Tibial artery (tissue), 4 donors: ENCODE measurements at regions of chr7 and their contacts with region 1.

Region 1: DNA sequence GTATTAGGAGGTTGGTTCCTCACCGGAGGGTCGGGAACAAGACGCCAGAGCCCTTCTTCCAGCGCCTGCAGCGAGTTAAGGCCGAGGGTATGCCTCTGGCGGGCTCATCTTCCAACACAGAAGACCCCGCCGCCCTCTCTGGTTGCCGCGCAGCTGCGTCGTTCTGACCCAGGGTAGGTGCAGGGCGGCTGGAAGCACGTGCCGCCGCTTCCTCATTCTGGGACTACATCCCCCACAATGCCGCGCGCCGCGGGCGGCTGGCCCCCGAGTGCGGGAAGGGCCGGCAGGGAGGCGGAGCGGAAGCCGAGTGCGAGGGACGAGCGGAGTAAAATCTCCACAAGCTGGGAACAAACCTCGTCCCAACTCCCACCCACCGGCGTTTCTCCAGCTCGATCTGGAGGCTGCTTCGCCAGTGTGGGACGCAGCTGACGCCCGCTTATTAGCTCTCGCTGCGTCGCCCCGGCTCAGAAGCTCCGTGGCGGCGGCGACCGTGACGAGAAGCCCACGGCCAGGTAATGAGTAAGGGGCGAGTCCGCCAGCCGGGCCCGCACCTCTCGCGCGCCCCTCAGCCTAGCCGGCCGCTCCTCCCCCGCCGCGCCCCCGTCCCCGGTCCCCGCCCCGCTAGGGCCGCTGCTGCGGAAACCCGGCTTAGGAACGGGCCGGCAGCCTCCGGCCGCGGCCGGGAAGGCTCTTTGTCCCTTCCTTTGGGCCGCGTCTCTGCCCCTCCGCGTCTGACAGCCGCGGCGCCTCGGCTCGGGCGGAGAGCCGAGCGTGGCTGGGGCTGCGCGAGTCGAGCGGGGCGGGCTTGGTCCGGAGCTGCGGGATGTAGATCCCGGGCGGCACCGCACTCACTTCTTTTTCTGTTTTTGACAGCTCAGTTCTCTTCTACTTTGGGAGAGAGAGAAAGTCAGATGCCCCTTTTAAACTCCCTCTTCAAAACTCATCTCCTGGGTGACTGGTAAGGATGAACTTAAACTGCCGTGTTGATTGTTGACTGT is at the start of gene CCDC126:
- DNase-seq: peak; percentile 92 to 97
- H3K4me3 ChIP-seq: peak within 1 kb of the TSS; percentile 85 to 94
- H3K27ac ChIP-seq: peak within 1 kb of the TSS; percentile 98
- H3K4me1 ChIP-seq: peaks cover 0 to 31% (median 9%) of the 10 kb centered on the region in 4 donors
- H3K27me3 ChIP-seq: peaks cover 0 to 2% of the 10 kb centered on the region in 2 donors
- CTCF ChIP-seq: no peak

Region 2: DNA sequence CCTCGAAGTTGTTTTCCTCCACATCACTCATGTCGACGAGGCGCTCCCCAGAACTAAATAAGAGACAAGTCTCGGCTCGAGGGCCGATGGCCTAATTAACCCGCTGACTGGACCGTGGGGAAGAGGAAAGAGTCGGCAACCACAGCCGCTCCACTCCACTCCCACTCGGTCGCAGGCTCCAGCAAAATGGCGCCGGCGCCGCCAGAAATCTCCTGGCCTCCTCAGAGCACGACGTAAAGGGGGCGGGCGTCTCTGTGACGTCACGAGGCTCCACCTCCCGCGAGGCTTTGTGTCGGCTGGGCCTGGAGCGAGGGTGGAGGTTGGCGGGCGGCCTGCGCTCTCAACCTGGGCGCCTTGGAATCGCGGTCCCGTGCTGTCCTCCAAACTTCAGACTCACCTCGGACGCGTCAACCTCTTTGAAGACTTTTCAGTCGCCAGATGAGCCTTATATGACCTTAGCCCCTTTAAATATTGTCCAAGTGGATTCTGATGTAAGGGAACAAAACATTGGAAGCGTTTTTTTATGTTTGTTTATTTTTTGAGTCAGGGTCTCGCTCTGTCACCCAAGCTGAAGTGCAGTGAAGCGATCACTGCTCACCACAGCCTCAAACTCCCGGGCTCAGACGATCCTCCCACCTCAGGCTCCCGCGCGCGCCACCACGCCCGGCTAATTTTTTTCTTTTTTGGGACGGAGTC is 65.5 kb before region 1 on chr7 and contains the start of gene TRA2A:
- intact Hi-C with region 1: loop called (anchors 5 kb)
- DNase-seq: peak; percentile 97 to 98
- H3K4me3 ChIP-seq: peak within 1 kb of the TSS; percentile 78 to 93
- H3K27ac ChIP-seq: peak within 1 kb of the TSS; percentile 93 to 99
- H3K4me1 ChIP-seq: peaks cover 0 to 37% (median 19%) of the 10 kb centered on the region in 4 donors
- H3K27me3 ChIP-seq: no peaks in the 10 kb centered on the region
- CTCF ChIP-seq: no peak

Region 3: DNA sequence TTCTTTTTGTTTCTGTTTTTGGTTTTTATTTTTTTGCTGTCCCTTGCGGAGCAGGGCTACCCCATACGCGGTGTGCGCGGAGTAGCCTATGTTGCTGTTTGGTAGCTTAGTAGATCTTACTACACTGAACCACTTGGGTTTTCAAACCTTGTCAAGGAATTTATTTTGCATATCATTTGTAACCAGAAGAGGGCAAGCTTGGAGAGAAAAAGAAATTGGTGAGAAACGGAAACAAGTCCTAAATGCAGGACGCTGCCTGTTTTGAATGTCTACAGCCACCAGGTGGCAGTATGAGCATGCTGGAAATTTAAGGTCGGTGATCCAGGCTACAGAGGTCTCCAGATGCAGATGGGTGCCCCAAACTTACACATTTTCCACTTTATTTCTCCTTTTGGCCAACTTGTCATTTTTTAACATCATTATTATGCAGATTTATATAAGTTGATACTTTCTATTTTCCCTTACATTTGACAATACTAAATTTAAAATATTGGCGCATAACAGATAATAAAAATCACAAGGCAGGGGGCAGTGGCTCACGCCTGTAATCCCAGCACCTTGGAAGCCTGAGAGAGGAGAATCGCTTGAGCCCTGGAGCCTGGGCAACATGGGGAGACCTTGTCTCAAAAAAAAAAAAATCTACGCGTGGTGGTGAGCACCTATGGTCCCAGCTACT is 50.4 kb before region 1 on chr7:
- intact Hi-C with region 1: no loop called
- DNase-seq: peak; percentile 78 to 84
- H3K4me3 ChIP-seq: no peak overlapping the region
- H3K27ac ChIP-seq: no peak overlapping the region
- H3K4me1 ChIP-seq: no peaks in the 10 kb centered on the region
- H3K27me3 ChIP-seq: no peaks in the 10 kb centered on the region
- CTCF ChIP-seq: peak; percentile 95

Region 4: DNA sequence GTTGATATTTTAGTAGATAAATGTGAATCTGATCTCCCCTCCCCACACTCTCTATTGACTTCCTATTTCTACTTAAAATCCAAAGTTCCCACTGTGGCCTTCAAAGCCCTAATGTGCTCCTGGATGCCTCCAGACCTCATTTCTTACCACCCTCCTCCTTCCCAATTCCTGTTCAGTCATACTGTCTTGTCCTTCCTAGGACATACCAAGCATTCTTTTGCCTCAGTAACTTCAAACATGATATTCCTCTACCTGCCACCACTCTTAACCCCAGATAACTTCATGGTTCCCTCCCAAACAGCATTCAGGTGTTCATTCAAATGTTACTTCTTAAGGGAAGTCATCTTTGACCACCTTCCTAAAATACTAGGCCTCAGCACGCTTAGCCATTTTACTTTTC is 48.4 kb after region 1 on chr7:
- intact Hi-C with region 1: no loop called
- DNase-seq: no peak
- H3K4me3 ChIP-seq: no peak overlapping the region
- H3K27ac ChIP-seq: no peak overlapping the region
- H3K4me1 ChIP-seq: no peaks in the 10 kb centered on the region
- H3K27me3 ChIP-seq: no peaks in the 10 kb centered on the region
- CTCF ChIP-seq: no peak

Region 5: DNA sequence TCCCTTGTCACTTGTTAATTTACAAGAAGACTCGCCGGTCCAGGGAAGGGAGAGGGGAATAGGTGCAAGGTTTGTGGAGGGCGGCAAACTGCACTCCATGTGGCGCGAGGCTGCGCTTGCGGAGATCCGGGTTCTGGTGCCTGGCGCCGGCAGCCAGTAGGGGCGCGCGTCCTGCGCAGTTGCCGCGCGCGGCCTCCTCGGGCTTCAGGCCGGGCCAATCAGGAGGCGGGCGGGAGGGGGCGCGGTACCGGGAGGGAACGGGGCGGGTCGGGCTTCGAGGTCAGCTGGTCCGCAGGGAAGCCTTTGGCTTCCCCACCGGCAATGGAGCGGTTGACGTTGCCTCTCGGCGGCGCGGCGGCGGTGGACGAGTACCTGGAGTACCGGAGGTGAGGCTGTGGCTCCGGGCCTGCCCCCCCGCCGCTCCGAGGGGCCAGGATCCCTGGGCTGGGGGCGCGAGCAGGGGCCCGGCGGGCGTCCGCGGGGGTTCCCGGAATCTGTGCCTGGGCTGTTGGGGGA is 82.6 kb after region 1 on chr7 and contains the start of gene FAM221A:
- intact Hi-C with region 1: loop called (anchors 2 kb)
- DNase-seq: peak; percentile 84 to 95
- H3K4me3 ChIP-seq: peak within 1 kb of the TSS; percentile 76
- H3K27ac ChIP-seq: peak within 1 kb of the TSS; percentile 84 to 85
- H3K4me1 ChIP-seq: peaks cover 0 to 8% (median 7%) of the 10 kb centered on the region in 4 donors
- H3K27me3 ChIP-seq: no peaks in the 10 kb centered on the region
- CTCF ChIP-seq: peak; percentile 60 to 87